Sigmoid colon (tissue), 7 donors: ENCODE measurements at regions of chr12 and their contacts with region 1.

Region 1: DNA sequence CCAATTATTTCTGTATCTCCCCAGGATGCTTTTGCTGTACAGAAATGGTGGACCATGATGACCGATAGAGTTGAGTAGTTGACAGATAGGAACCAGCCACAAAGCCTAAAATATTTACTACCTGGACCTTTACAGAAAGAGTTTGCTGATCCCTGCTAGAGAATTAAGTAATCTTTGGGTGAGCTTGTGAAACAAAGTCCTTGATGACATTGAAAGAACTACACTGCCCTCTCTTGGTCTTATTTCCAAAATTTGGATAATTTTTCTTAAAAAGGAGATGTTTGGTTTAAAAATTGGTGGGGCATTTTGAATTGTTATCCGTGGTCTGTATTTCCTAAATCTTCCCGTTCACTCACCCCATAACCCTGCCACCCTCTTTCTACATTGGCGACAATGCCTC is 13.7 kb upstream of the TCTN1 start:
- DNase-seq: no peak
- H3K4me3 ChIP-seq: no peak overlapping the region
- H3K27ac ChIP-seq: no peak overlapping the region
- H3K4me1 ChIP-seq: peaks cover 0 to 7% (median 0%) of the 10 kb centered on the region in 4 donors
- H3K27me3 ChIP-seq: no peaks in the 10 kb centered on the region
- CTCF ChIP-seq: peak in 3 of 4 experiments; percentile 31 to 38 (median 33)
- EP300 ChIP-seq: no peak
- POLR2A ChIP-seq: no peak

Region 2: GRCh38 chr12:110449799-110450497 is 150.3 kb before region 1 on chr12 and contains the start of gene ARPC3:
- intact Hi-C with region 1: loop called (anchors 2 kb)
- DNase-seq: peak; percentile 97
- H3K4me3 ChIP-seq: peak within 1 kb of the TSS; percentile 76 to 90 (median 82)
- H3K27ac ChIP-seq: peak within 1 kb of the TSS; percentile 90 to 93 (median 90)
- H3K4me1 ChIP-seq: peaks cover 2 to 26% (median 20%) of the 10 kb centered on the region in 4 donors
- H3K27me3 ChIP-seq: no peaks in the 10 kb centered on the region
- CTCF ChIP-seq: peak; percentile 79 to 91 (median 86)
- EP300 ChIP-seq: no peak
- POLR2A ChIP-seq: peak; percentile 17 to 56
- total RNA-seq, gene ARPC3: 156 to 304 (median 231) TPM

Region 3: DNA sequence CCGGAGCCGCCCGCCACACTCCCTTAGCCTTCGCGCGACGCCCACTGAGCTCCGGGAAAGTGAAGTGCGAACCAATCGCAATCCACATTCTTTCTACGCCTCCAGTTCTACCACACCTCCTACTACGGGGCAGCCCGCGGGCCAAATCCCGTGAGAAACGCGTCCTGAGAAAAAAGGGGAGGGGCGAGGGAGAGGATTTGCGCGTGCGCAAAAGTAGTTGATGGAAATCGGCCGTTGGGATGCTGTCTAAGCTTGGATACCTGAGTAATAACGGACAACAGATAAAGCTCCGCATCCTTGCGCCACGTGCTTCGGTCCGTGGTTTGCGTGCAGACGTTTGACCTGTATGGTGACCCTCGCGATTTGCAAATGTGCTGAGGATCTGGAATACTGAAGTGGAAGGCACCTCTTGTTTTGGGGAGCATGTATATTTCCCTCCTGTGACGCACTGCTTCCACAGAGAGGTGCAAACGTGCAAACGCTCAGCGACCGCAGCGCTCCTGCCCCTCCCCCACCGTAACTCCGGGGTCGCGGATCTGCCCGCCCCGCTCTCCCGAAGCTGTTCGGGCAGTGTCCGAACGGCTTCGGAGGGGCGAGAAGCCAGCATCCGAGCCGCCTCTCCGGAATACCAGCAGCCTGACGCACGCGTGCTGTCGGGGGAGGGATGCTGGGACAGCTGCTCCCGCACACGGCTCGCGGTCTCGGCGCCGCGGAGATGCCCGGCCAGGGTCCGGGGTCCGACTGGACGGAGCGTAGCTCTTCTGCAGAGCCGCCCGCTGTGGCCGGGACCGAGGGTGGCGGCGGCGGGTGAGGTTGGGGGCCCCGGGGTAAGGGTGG is 131.8 kb before region 1 on chr12 and contains the starts of genes FAM216A and GPN3:
- intact Hi-C with region 1: loop called (anchors 2 kb)
- DNase-seq: peak; percentile 98
- H3K4me3 ChIP-seq: peak within 1 kb of the TSS; percentile 66 to 94 (median 78)
- H3K27ac ChIP-seq: peak within 1 kb of the TSS; percentile 96 to 99 (median 98)
- H3K4me1 ChIP-seq: peaks cover 0 to 35% (median 23%) of the 10 kb centered on the region in 4 donors
- H3K27me3 ChIP-seq: no peaks in the 10 kb centered on the region
- CTCF ChIP-seq: no peak
- EP300 ChIP-seq: peak in 1 of 4 donors; percentile 75
- POLR2A ChIP-seq: peak in 1 of 2 donors; percentile 48
- total RNA-seq, gene FAM216A: 7.5 to 13.0 (median 8.3) TPM
- total RNA-seq, gene GPN3: 16.1 to 22.8 (median 20.6) TPM

Region 4: GRCh38 chr12:110508071-110508586 is 92.1 kb before region 1 on chr12:
- intact Hi-C with region 1: loop called (anchors 1 kb)
- DNase-seq: no peak
- H3K4me3 ChIP-seq: no peak overlapping the region
- H3K27ac ChIP-seq: no peak overlapping the region
- H3K4me1 ChIP-seq: peaks cover 0 to 5% (median 4%) of the 10 kb centered on the region in 4 donors
- H3K27me3 ChIP-seq: no peaks in the 10 kb centered on the region
- CTCF ChIP-seq: no peak
- EP300 ChIP-seq: no peak
- POLR2A ChIP-seq: no peak